Ascending aorta (tissue), 2 donors: ENCODE measurements at regions of chr14 and their contacts with region 1.

Region 1: GRCh38 chr14:74979442-74980361 is 23.0 kb upstream of the EIF2B2 start:
- DNase-seq: peak in 1 of 2 donors; percentile 78
- H3K4me3 ChIP-seq: no peak overlapping the region
- H3K27ac ChIP-seq: peak overlapping the region; percentile 95
- H3K4me1 ChIP-seq: peaks cover 25 to 43% of the 10 kb centered on the region in 2 donors
- H3K27me3 ChIP-seq: no peaks in the 10 kb centered on the region
- CTCF ChIP-seq: peak in 2 of 3 experiments; percentile 22 to 34

Region 2: GRCh38 chr14:74955229-74956026 is 24.3 kb before region 1 on chr14 and contains the start of gene PGF:
- intact Hi-C with region 1: loop called (anchors 1 kb)
- DNase-seq: peak in 1 of 2 donors; percentile 82
- H3K4me3 ChIP-seq: peak within 1 kb of the TSS; percentile 54 to 90
- H3K27ac ChIP-seq: peak within 1 kb of the TSS; percentile 54 to 67
- H3K4me1 ChIP-seq: peaks cover 9 to 24% of the 10 kb centered on the region in 2 donors
- H3K27me3 ChIP-seq: no peaks in the 10 kb centered on the region
- CTCF ChIP-seq: no peak
- total RNA-seq, gene PGF: 41.1 TPM

Region 3: DNA sequence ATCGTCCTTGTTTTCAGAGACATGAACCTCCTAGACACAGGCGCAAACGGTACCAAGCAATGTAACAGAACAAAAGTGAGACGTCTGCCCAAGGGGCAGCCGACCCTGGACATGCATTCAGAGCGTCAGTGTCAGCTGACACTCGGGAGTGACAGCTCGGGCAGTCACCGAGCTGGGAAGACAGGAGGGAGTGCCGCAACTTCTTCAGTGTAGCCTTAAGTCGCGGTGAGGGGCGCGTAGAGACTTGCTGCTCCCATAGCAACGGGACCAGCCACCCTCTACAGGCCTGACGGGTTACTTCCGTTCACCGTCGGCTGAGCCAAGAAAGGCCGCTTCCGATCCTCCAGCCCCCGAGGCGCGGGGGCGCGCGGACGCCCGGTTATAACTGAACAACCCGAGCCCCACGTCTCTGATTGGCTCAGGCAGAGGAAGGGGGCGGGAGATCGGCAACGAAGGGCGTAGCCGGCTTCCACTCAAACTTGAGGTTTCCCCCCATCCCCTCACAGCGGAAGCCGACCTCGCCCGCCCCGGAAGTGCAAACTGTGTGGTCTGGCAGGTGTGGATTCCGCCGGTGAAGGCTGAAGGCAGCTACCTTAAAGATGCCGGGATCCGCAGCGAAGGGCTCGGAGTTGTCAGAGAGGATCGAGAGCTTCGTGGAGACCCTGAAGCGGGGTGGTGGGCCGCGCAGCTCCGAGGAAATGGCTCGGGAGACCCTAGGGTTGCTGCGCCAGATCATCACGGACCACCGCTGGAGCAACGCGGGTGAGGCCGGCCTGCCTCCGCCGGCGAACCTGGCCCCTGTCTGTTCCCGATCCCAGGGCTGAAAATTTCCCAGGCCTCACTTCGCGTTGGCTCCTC is 22.9 kb after region 1 on chr14 and contains the start of gene EIF2B2:
- intact Hi-C with region 1: loop called (anchors 1 kb)
- DNase-seq: peak; percentile 95 to 99
- H3K4me3 ChIP-seq: peak within 1 kb of the TSS; percentile 60 to 79
- H3K27ac ChIP-seq: peak within 1 kb of the TSS; percentile 67 to 84
- H3K4me1 ChIP-seq: peaks cover 5 to 20% of the 10 kb centered on the region in 2 donors
- H3K27me3 ChIP-seq: no peaks in the 10 kb centered on the region
- CTCF ChIP-seq: peak; percentile 11 to 38 (median 20)
- total RNA-seq, gene EIF2B2: 27.1 TPM